Adrenal gland (tissue), 19 donors: ENCODE measurements at regions of chr19 and their contacts with region 1.

Region 1: GRCh38 chr19:35931161-35931873 is 4.9 kb upstream of the LRFN3 start:
- DNase-seq: peak; percentile 99 to 100 (median 99)
- H3K4me3 ChIP-seq: peak overlapping the region in 1 of 4 donors; percentile 11
- H3K27ac ChIP-seq: peak overlapping the region in 2 of 5 donors; percentile 36 to 79
- H3K4me1 ChIP-seq: peaks cover 14 to 15% of the 10 kb centered on the region in 2 donors
- H3K27me3 ChIP-seq: no peaks in the 10 kb centered on the region
- CTCF ChIP-seq: peak; percentile 57 to 99 (median 97)
- POLR2A ChIP-seq: peak; percentile 80 to 85

Region 2: DNA sequence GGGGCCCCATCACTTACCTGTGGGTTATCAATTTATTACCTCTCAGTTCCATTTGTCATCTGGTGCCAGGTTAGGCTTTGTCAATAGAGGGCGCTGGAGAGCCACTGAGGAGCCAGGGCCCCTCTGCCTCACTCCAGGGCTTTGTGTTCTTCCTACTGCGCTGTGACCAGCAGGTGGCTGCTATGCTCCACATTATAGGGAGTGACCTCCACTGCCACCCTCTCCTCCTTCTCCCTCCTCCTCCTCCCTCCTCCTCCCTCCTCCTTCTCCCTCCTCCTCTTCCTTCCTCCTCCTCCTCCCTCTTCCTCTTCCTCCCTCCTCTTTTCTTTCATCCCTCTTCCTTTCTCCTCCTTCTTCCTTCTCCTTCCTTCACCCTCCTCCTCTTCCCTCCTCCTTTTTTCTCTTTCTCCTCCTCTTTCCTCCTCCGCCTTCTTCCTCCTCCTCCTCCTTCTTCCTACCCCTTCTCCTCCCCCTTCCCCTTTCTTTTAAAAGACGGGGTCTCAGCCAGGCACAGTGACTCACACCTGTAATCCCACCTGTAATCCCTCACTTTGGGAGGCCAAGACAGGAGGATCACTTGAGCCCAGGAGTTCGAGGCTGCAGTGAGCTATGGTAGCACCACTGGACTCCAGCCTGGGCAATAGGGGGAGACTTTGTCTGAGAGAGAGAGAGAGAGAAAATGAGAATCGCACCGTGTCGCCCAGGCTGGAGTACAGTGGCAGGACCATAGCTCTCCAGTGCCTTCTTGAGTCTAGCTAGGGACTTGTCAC is 237.3 kb before region 1 on chr19:
- intact Hi-C with region 1: loop called in 1 of 2 experiments (anchors 10 kb)
- DNase-seq: peak; percentile 87 to 96 (median 90)
- H3K4me3 ChIP-seq: no peak overlapping the region
- H3K27ac ChIP-seq: no peak overlapping the region
- H3K4me1 ChIP-seq: no peaks in the 10 kb centered on the region
- H3K27me3 ChIP-seq: no peaks in the 10 kb centered on the region
- CTCF ChIP-seq: peak; percentile 96 to 100 (median 98)
- POLR2A ChIP-seq: peak in 1 of 2 donors; percentile 12

Region 3: DNA sequence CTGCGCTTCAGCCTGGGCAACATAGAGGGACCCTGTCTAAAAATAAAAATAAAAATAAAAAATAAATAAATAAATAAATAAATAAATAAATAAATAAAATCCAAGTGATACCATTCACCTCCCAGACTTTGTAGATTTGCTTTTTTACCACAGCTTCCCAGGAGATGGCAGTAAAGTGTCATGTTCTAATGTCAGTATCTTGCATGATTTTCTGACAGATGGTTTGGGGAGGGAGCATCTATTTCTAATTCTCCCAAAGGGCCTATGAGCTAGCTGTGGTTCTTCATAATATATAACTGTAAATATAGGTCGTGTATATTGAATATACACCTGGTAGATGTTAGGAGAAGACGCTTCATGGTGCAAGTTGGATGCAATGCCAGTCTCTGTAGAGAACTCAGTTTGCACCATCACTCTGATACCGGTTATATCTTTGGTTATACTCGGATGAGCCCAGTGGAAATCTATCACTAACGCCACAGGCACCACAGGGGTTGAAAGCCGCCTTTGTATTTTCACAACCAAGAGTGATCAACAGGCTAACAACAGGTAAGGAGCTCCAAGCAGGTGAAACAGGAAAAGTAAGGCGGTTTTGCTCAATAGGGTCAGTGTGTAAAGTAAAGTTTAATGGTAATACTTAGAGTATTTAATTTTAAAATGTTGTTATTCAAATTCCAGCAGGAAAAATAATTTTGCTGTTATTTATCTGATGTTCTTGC is 49.0 kb before region 1 on chr19:
- intact Hi-C with region 1: loop called (anchors 2 to 5 kb)
- DNase-seq: peak in 6 of 7 donors; percentile 48 to 70 (median 61)
- H3K4me3 ChIP-seq: no peak overlapping the region
- H3K27ac ChIP-seq: no peak overlapping the region
- H3K4me1 ChIP-seq: no peaks in the 10 kb centered on the region
- H3K27me3 ChIP-seq: no peaks in the 10 kb centered on the region
- CTCF ChIP-seq: peak; percentile 31 to 87 (median 64)
- POLR2A ChIP-seq: no peak

Region 4: DNA sequence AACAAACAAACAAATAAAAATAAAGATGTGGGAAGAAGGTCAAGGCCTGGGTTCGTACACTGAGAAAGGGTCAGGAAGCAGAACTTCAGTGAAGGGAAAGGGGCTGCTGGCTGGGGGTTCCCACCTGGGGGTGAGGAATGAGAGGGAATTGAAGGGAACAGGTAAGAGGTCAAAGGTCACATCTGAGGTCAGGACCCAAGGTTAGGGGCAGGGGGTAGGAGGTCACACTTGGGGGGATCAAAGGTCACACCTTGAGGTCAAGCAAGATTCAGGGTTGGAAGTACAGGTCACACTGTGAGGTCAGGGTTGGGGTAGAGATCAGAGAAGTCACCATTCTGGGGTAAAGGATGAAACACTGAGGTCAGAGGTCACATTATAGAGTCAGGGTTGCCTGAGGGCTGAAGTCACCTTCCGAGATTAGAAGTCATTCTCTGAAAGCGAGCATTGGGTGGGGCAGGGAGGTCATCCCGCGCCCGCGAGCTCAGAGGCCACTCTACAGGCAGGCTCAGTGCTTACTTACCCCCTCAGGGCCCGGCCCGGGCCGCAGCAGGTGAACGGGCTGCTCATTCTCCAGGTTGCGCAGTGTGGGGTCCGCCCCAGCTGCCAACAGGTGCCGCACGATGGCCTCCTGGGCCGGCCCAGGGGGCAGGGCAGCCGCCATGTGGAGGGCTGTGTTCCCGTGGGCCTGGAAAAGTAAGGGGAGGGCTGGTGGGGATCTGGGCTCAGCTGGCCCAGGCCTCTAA is 41.8 kb before region 1 on chr19:
- intact Hi-C with region 1: loop called in 1 of 2 experiments (anchors 5 kb)
- DNase-seq: no peak
- H3K4me3 ChIP-seq: no peak overlapping the region
- H3K27ac ChIP-seq: no peak overlapping the region
- H3K4me1 ChIP-seq: no peaks in the 10 kb centered on the region
- H3K27me3 ChIP-seq: no peaks in the 10 kb centered on the region
- CTCF ChIP-seq: no peak
- POLR2A ChIP-seq: no peak

Region 5: GRCh38 chr19:35986664-35987570 is 55.6 kb after region 1 on chr19:
- intact Hi-C with region 1: no loop called
- DNase-seq: peak in 3 of 7 donors; percentile 19 to 32 (median 30)
- H3K4me3 ChIP-seq: peak overlapping the region in 1 of 4 donors; percentile 38
- H3K27ac ChIP-seq: no peak overlapping the region
- H3K4me1 ChIP-seq: peaks cover 0 to 4% of the 10 kb centered on the region in 2 donors
- H3K27me3 ChIP-seq: peaks cover 16% of the 10 kb centered on the region
- CTCF ChIP-seq: no peak
- POLR2A ChIP-seq: no peak